ENCODE measurements at regions of chr7 and their contacts with region 1.

Region 1: DNA sequence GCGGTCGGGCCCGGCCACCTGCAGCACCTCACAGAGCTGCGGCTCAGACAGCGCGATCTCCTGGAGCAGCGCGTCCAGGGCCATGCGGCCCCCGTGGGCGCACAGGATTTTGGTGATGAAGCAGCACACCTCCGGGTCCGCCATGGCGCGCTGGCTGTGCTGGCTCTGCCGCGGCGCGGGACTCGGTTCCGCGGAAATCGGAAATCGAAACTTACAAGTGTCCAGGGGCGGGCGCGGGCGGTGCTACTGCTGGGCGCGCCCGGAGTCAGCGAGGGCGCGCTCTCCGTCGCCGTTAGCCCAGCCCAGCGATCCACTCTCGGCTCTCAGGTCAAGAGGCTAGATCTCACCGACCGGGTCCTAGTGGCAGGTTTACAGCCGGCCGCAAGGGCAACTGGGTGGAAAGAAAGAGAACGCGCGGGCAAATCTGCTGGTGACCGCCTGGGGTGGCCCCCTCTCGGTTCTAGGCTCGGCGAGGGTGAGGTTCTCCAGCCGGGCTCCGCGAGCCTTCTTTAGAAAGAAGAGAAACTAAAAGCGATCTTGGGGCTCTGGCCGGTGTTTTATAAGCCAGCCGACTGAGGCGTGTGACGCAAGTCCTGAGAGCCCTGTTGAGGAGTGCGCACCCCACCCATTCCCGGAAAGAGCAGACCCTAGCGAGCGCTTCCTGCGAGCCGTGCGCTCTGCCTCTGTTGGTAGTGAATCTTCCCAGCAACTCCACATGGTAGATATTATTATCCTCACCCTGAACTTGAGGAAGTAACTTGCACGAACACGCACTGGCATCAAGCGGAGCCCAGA is at the start of gene ZC3HAV1:
- DNase-seq: no peak
- ATAC-seq: peak; percentile 78
- H3K4me3 ChIP-seq: peak within 1 kb of the TSS; percentile 99
- H3K27ac ChIP-seq: peak within 1 kb of the TSS; percentile 94
- H3K4me1 ChIP-seq: peaks cover 6% of the 10 kb centered on the region; the same call in 1 of the 2 replicates
- H3K27me3 ChIP-seq: no peaks in the 10 kb centered on the region
- CTCF ChIP-seq: 0 out of 6 replicates have a peak, but pooled peaks of 1 of the 3 experiments have one; percentile 15
- EP300 ChIP-seq: no peak
- POLR2A ChIP-seq: peak; percentile 80
- RAD21 ChIP-seq: no peak
- polyA plus RNA-seq, gene ZC3HAV1: 18.5 to 19.7 TPM

Region 2: GRCh38 chr7:138992052-138992531 is 117.3 kb before region 1 on chr7:
- CTCF ChIA-PET with region 1: no interaction called
- POLR2A ChIA-PET with region 1: no interaction called
- RAD21 ChIA-PET with region 1: no interaction called
- SMC1A ChIA-PET with region 1: no interaction called
- in situ Hi-C with region 1: no loop called
- intact Hi-C with region 1: no loop called
- DNase-seq: no peak
- ATAC-seq: no peak
- H3K4me3 ChIP-seq: no peak overlapping the region
- H3K27ac ChIP-seq: no peak overlapping the region
- H3K4me1 ChIP-seq: no peaks in the 10 kb centered on the region
- H3K27me3 ChIP-seq: no peaks in the 10 kb centered on the region; a peak in 1 of 4 replicates
- CTCF ChIP-seq: no peak
- EP300 ChIP-seq: no peak
- POLR2A ChIP-seq: no peak
- RAD21 ChIP-seq: no peak

Region 3: DNA sequence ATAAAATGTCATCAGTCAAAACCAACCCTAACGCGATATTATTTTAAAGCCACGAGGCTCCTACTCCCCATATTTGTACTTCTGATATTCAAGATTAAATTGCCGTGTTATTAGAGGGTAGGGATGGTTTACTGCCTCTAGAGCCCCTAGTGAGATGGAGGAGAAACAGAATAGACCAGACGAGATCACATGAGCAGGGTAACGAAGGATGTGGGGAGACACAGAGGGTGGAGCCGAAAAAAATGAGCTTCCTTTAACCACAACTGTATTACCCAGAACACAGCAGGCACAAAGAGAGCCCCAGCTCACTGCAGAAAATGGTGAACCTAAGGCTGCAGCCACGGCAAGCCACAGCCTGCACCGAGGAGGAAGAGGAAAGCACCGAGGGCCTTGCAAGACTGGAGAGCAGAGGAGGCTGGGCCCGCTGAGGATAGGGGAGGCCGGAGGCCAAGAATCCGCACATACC is 14.2 kb before region 1 on chr7:
- CTCF ChIA-PET with region 1: interaction called, 16 read pairs
- POLR2A ChIA-PET with region 1: interaction called, 28 read pairs
- RAD21 ChIA-PET with region 1: interaction called, 55 read pairs
- SMC1A ChIA-PET with region 1: interaction called, 33 read pairs
- in situ Hi-C with region 1: no loop called
- intact Hi-C with region 1: no loop called
- DNase-seq: peak; percentile 88
- ATAC-seq: peak; percentile 99
- H3K4me3 ChIP-seq: peak overlapping the region; percentile 65
- H3K27ac ChIP-seq: peak overlapping the region; percentile 70
- H3K4me1 ChIP-seq: peaks cover 20% of the 10 kb centered on the region
- H3K27me3 ChIP-seq: no peaks in the 10 kb centered on the region
- CTCF ChIP-seq: 0 out of 6 replicates have a peak, but pooled peaks of 2 of the 3 experiments have one; percentile 2 to 5
- EP300 ChIP-seq: peak in 1 of 2 experiments; percentile 38; a peak in 1 of 4 replicates
- POLR2A ChIP-seq: peak; percentile 74
- RAD21 ChIP-seq: no peak

Region 4: GRCh38 chr7:139133335-139134139 is 24.2 kb after region 1 on chr7:
- CTCF ChIA-PET with region 1: interaction called, 4 read pairs
- POLR2A ChIA-PET with region 1: no interaction called
- RAD21 ChIA-PET with region 1: no interaction called
- SMC1A ChIA-PET with region 1: interaction called, 4 read pairs
- in situ Hi-C with region 1: no loop called
- intact Hi-C with region 1: loop called (anchors 2 kb)
- DNase-seq: peak; percentile 53
- ATAC-seq: peak; percentile 98
- H3K4me3 ChIP-seq: peak overlapping the region; percentile 77
- H3K27ac ChIP-seq: no peak overlapping the region; the same call in 1 of the 2 replicates
- H3K4me1 ChIP-seq: peaks cover 13% of the 10 kb centered on the region; the same call in 1 of the 2 replicates
- H3K27me3 ChIP-seq: no peaks in the 10 kb centered on the region
- CTCF ChIP-seq: no peak
- EP300 ChIP-seq: 0 out of 4 replicates have a peak, but pooled peaks of 1 of the 2 experiments have one; percentile 29
- POLR2A ChIP-seq: peak; percentile 75
- RAD21 ChIP-seq: peak; percentile 22; the same call in 1 of the 2 replicates

Region 5: DNA sequence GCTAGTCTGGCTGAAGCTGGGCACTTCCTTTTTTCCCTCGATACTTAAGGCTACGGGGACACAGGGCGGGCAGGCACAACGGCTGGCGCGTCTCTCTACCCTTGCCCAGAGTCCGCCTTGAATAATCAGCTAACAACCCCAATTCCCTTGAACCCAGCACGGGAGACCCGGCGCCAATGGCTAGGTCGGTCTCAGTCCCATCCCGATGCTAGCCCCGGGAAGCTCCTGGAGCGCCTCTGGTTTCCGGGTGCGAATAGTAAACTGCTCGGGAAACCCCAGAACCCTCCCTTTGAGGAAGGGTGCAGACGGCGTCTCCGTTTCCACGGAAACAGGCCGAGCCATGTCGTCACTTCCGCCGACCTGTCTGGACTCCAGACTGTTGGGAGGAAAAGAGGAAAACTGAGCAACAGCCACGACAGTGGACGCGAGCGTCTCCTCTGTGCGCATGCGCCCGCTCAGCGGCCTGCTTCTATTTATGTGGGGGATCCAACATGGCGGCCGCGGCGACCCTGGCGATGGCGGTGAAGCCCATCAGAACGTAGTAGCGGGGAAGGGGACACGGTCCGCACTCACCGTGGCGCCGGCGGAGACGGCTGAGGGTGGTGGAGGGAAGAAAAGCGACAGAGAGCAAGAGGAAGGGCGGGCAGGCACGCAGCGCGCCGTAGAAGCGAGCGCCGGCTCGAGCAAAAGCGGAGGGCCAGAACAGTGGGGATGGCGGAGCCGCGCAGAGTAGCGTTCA is 121.6 kb after region 1 on chr7 and contains the start of gene UBN2:
- CTCF ChIA-PET with region 1: no interaction called
- POLR2A ChIA-PET with region 1: no interaction called
- RAD21 ChIA-PET with region 1: interaction called, 3 read pairs
- SMC1A ChIA-PET with region 1: interaction called, 4 read pairs
- in situ Hi-C with region 1: no loop called
- intact Hi-C with region 1: loop called (anchors 1 kb)
- DNase-seq: peak; percentile 96
- ATAC-seq: peak; percentile 92
- H3K4me3 ChIP-seq: peak within 1 kb of the TSS; percentile 100
- H3K27ac ChIP-seq: peak within 1 kb of the TSS; percentile 74
- H3K4me1 ChIP-seq: no peaks in the 10 kb centered on the region
- H3K27me3 ChIP-seq: no peaks in the 10 kb centered on the region
- CTCF ChIP-seq: no peak
- EP300 ChIP-seq: 0 out of 4 replicates have a peak, but pooled peaks of 1 of the 2 experiments have one; percentile 32
- POLR2A ChIP-seq: peak; percentile 90
- RAD21 ChIP-seq: no peak
- polyA plus RNA-seq, gene UBN2: 0.27 to 0.37 TPM

Region 6: DNA sequence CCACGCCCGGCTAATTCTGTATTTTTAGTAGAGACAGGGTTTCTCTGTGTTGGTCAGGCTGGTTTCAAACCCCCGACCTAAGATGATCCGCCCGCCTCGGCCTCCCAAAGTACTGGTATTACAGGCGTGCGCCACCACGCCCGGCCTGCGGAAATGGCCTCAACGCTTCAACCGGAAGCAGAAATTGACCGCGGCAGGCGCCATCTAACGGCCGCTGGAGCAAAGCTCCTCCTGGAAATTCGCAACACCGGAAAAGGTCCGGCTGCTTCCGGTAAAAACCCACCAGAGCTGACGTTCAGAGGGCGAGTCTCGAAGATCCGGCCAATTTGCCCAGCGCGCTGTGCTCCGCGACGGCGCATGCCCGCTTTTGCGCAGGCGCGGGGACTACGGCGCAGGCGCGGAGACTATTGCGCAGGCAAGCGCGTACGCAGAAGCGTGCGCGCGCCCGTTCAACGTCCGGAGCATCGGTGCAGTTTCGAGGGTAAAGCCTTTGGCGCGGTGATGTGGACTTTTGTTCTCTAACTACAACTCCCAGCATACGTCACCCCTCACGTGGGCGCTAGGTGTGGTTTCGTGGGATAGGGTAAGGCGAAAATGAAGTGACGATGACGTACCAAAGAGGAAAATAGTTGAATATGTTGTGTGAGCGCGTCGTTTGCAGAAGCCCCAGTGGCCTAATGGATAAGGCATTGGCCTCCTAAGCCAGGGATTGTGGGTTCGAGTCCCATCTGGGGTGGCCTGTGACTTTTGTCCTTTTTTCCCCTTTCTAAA is 230.8 kb after region 1 on chr7:
- CTCF ChIA-PET with region 1: no interaction called
- POLR2A ChIA-PET with region 1: no interaction called
- RAD21 ChIA-PET with region 1: no interaction called
- SMC1A ChIA-PET with region 1: no interaction called
- in situ Hi-C with region 1: no loop called
- intact Hi-C with region 1: loop called (anchors 1 kb)
- DNase-seq: peak; percentile 100
- ATAC-seq: peak; percentile 85
- H3K4me3 ChIP-seq: peak overlapping the region; percentile 84
- H3K27ac ChIP-seq: peak overlapping the region; percentile 97
- H3K4me1 ChIP-seq: no peaks in the 10 kb centered on the region
- H3K27me3 ChIP-seq: no peaks in the 10 kb centered on the region
- CTCF ChIP-seq: peak; percentile 54 to 81 (median 68)
- EP300 ChIP-seq: peak; percentile 8 to 76; a peak in 3 of 4 replicates
- POLR2A ChIP-seq: peak; percentile 10; the same call in 1 of the 2 replicates
- RAD21 ChIP-seq: peak; percentile 35; the same call in 1 of the 2 replicates

Region 7: GRCh38 chr7:139359366-139360209 is 250.2 kb after region 1 on chr7 and contains the start of gene LUC7L2:
- CTCF ChIA-PET with region 1: no interaction called
- POLR2A ChIA-PET with region 1: no interaction called
- RAD21 ChIA-PET with region 1: interaction called, 6 read pairs
- SMC1A ChIA-PET with region 1: no interaction called
- in situ Hi-C with region 1: loop called (anchors 5 kb)
- intact Hi-C with region 1: loop called (anchors 5 kb)
- DNase-seq: peak; percentile 94
- ATAC-seq: peak; percentile 84
- H3K4me3 ChIP-seq: peak within 1 kb of the TSS; percentile 95
- H3K27ac ChIP-seq: peak within 1 kb of the TSS; percentile 98
- H3K4me1 ChIP-seq: no peaks in the 10 kb centered on the region
- H3K27me3 ChIP-seq: no peaks in the 10 kb centered on the region
- CTCF ChIP-seq: peak in 1 of 3 experiments; percentile 7; a peak in 2 of 6 replicates
- EP300 ChIP-seq: peak in 1 of 2 experiments; percentile 36; a peak in 1 of 4 replicates
- POLR2A ChIP-seq: peak; percentile 97
- RAD21 ChIP-seq: no peak
- polyA plus RNA-seq, gene LUC7L2: 31.7 to 37.8 TPM

Region 8: GRCh38 chr7:139494835-139495579 is 385.6 kb after region 1 on chr7:
- CTCF ChIA-PET with region 1: no interaction called
- POLR2A ChIA-PET with region 1: no interaction called
- RAD21 ChIA-PET with region 1: no interaction called
- SMC1A ChIA-PET with region 1: no interaction called
- in situ Hi-C with region 1: no loop called
- intact Hi-C with region 1: loop called (anchors 5 kb)
- DNase-seq: peak; percentile 47
- ATAC-seq: peak; percentile 88
- H3K4me3 ChIP-seq: 0 out of 2 replicates have a peak overlapping the region, but pooled peaks have one; percentile 28
- H3K27ac ChIP-seq: peak overlapping the region; percentile 84
- H3K4me1 ChIP-seq: peaks cover 24% of the 10 kb centered on the region
- H3K27me3 ChIP-seq: no peaks in the 10 kb centered on the region
- CTCF ChIP-seq: no peak
- EP300 ChIP-seq: peak; percentile 43 to 64; a peak in 2 of 4 replicates
- POLR2A ChIP-seq: no peak
- RAD21 ChIP-seq: peak; percentile 2; the same call in 1 of the 2 replicates